Activated CD8-positive, alpha-beta memory T cell treated with anti-CD3 and anti-CD28 coated beads, Interleukin-2, amount 10 ng/mL, durations not matched to agents 7 days and 5 days (primary cell): ENCODE measurements at regions of chr2 and their contacts with region 1.

Region 1: GRCh38 chr2:11129598-11130449 is 25.4 kb upstream of the SLC66A3 start:
- DNase-seq: peak; percentile 77
- ATAC-seq: peak; percentile 83
- H3K4me3 Mint-ChIP-seq: peak overlapping the region; percentile 50
- H3K27ac Mint-ChIP-seq: no peak overlapping the region
- H3K4me1 Mint-ChIP-seq: peaks cover 25% of the 10 kb centered on the region
- H3K27me3 Mint-ChIP-seq: peaks cover 17% of the 10 kb centered on the region

Region 2: DNA sequence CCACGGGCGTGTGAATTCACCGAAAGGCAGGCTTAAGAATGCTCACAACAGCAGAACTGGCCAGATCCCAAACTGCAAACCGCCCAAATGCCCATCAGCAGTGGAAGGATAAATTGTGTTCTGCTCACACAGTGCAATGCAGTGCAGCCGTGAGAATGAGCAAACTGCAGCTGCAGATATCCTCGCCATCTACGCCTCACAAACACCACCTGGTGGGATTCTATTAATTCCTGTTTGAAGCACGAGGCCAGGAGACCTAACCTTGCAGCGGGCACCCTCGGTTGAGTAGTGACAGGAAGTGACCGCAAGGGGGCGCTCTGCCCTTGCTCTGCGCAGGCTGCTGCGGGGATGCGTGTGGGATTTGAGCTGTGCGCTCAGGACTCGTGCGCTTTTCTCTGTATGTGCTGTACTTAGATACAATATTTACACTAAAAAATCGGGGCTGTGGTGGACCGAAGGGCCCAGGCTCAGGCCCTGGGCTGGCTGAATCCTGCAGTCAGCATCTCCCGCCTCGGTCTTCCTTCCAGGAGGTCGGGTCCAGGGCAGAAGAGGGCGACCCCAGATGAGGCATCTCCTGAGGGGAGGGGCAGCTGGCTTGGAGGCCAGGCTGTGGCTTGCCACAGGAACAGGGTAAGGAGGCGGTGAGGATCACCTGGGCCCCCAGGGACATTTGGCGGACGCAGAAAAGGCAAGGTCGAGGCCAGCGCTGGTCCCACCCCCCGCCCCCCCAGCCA is 297.5 kb before region 1 on chr2:
- CTCF ChIA-PET with region 1: interaction called, 121 read pairs
- DNase-seq: peak; percentile 84
- ATAC-seq: peak; percentile 90
- H3K4me3 Mint-ChIP-seq: no peak overlapping the region
- H3K27ac Mint-ChIP-seq: no peak overlapping the region
- H3K4me1 Mint-ChIP-seq: peaks cover 4% of the 10 kb centered on the region
- H3K27me3 Mint-ChIP-seq: peaks cover 51% of the 10 kb centered on the region

Region 3: GRCh38 chr2:11154923-11155380 is 25.1 kb after region 1 on chr2:
- CTCF ChIA-PET with region 1: interaction called, 35 read pairs
- DNase-seq: peak; percentile 98
- ATAC-seq: peak; percentile 91
- H3K4me3 Mint-ChIP-seq: peak overlapping the region; percentile 72
- H3K27ac Mint-ChIP-seq: peak overlapping the region; percentile 86
- H3K4me1 Mint-ChIP-seq: peaks cover 13% of the 10 kb centered on the region
- H3K27me3 Mint-ChIP-seq: peaks cover 13% of the 10 kb centered on the region

Region 4: DNA sequence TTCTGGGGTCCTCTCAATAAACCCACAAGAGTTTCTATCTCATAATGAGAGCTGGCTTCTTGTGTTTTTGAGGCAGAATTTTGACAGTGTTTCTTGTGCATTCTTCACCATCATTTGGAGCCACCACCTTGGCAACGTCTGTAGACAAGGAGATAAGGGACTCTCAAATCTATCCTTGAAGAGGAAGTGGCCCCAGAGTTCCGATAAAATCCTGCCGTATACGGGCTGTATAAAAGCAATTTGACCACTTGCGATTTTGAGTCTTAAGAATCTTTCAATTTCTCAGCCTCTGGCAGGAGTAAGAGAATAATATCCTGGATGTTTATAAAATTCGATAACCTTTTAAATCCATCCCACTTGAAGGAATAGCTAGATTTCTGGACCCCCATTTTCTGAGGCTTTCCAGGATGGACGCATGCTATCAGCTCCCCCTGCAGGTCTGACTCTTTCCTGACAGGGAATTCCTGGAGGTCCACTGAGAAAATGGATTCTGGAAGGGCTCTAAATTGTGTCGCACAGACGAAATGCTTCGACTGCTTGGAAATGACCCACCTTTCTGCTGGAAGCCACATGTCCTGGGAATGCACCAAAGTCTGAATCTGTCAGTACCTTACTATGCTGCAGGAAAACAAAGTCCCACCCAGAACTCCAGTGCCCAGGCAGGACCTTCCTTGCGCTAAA is 282.1 kb after region 1 on chr2:
- CTCF ChIA-PET with region 1: interaction called, 37 read pairs
- DNase-seq: no peak
- ATAC-seq: no peak
- H3K4me3 Mint-ChIP-seq: no peak overlapping the region
- H3K27ac Mint-ChIP-seq: no peak overlapping the region
- H3K4me1 Mint-ChIP-seq: peaks cover 2% of the 10 kb centered on the region
- H3K27me3 Mint-ChIP-seq: peaks cover 22% of the 10 kb centered on the region

Region 5: DNA sequence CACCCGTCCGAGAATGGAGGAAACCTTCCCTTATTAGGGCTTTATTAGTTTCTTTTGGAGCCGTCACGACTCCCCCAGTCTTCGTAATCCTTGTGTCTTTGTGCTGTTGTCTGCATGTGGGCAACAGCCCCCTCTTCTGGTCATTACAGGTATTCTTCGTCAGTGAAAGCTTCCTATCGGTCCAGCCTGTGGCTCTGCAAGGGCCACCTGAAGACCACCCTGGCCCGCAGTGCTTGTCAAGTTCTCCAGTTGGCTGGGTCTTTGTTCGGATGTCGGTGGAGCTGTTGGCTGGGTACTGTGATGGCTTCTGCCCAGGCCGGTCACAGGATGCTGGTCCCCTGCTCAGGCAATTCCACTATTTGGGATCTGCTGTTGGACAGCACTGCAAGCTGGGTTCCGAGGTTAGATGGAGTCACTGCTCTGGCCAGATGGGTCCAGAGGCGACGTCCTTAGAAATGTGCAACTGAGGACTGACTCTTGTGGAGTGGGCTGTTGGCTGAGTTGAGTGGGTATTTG is 317.0 kb after region 1 on chr2:
- CTCF ChIA-PET with region 1: interaction called, 36 read pairs
- DNase-seq: peak; percentile 55
- ATAC-seq: peak; percentile 61
- H3K4me3 Mint-ChIP-seq: no peak overlapping the region
- H3K27ac Mint-ChIP-seq: no peak overlapping the region
- H3K4me1 Mint-ChIP-seq: no peaks in the 10 kb centered on the region
- H3K27me3 Mint-ChIP-seq: no peaks in the 10 kb centered on the region

Region 6: GRCh38 chr2:11477994-11478393 is 348.2 kb after region 1 on chr2:
- CTCF ChIA-PET with region 1: interaction called, 17 read pairs
- DNase-seq: peak; percentile 89
- ATAC-seq: peak; percentile 78
- H3K4me3 Mint-ChIP-seq: no peak overlapping the region
- H3K27ac Mint-ChIP-seq: no peak overlapping the region
- H3K4me1 Mint-ChIP-seq: peaks cover under 1% of the 10 kb centered on the region
- H3K27me3 Mint-ChIP-seq: peaks cover 27% of the 10 kb centered on the region